ENCODE measurements at regions of chr2 and their contacts with region 1.

Region 1: DNA sequence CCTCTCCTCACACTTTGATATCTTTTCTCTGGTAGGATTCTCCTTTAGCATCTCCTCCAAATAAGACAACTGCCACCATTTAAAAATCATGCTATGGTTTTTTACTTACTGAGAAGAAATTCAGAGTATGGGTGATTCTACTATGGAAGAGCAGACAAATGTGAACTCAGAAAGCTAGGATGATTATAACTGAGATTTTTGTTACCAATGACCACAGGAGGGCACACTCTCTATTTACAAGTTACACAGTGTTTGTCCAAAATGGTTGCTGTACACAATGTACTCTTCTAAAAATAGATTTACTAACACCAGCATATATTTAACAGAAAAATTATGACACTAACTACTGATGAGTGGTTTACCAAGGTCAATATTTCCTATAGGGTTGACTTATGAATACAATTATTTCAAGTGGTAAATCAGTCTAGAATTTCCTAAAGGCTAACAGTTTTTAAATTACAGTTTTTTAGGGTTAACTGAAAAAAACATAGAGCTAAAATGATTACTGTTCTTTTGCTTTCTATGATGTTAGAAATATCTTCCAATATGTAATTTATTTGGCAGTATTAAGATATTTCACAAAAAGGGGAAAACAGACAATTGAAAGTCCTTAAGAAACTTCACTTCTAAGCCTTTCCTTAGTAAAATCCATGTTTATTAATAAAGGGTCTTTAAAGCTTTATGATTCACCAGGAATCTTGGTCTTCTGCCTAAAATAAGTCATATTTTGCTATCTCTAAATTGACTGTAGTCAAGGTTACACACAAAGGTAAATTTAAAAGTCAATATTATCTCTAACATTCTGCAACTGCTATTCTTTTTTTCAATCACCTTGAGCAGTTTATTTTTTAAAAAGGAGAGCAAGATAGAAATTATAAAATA is 57.2 kb downstream of the MAP4K3 start:
- DNase-seq: peak; percentile 65
- H3K4me3 ChIP-seq: no peak overlapping the region
- H3K27ac ChIP-seq: no peak overlapping the region
- H3K4me1 ChIP-seq: peaks cover 16% of the 10 kb centered on the region
- CTCF ChIP-seq: peak; percentile 93

Region 2: DNA sequence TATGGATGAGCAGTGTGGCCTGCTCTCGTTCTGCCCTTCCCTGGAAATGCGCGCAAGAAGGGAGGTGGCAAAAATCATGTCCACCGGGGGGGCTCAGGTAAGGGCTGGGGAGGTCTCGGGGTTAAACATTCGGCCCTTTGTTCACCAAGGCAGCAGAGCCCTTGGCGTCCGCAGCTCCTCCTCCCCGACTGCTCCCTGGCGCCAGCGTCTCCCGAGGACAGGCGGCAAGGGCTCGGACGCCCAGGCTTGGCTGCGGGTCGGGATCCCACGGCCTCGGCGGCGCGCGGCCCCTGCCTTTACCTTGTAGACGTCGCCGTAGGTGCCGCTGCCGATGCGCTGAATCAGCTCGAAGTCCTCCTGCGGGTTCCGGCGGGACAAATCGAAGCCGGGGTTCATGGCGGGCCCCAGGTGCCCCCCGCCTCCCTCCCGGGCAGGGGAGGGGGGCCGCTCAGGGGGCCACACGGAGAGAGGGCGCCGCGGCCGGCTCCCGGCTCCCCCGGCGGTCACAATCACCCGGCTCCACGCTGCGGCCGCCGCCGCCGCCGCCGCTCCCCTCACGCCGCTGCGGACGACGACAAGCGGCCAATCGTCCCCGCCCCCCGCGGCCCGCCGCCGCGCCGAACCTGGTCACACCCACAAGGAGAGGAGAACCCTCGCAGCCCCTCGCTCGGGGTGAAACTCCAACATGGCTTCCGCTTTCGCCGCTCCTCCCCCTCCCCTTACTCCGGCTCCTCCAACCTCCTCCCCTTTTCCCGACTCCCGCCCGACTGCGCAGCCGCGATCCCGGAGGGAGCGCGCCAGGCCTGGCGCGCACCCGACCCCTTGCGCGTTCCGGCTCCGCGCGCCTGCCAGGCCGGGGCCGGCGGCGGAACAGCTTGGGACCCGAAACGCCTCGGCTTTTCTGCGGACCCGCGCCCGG is 57.0 kb after region 1 on chr2 and contains the start of gene MAP4K3:
- CTCF ChIA-PET with region 1: no interaction called
- POLR2A ChIA-PET with region 1: interaction called, 3 read pairs
- intact Hi-C with region 1: loop called (anchors 2 kb)
- DNase-seq: peak; percentile 87
- H3K4me3 ChIP-seq: peak within 1 kb of the TSS; percentile 87
- H3K27ac ChIP-seq: peak within 1 kb of the TSS; percentile 61
- H3K4me1 ChIP-seq: peaks cover 32% of the 10 kb centered on the region
- CTCF ChIP-seq: no peak
- total RNA-seq, gene MAP4K3: 10.7 and 12.4 TPM in 2 replicates

Region 3: DNA sequence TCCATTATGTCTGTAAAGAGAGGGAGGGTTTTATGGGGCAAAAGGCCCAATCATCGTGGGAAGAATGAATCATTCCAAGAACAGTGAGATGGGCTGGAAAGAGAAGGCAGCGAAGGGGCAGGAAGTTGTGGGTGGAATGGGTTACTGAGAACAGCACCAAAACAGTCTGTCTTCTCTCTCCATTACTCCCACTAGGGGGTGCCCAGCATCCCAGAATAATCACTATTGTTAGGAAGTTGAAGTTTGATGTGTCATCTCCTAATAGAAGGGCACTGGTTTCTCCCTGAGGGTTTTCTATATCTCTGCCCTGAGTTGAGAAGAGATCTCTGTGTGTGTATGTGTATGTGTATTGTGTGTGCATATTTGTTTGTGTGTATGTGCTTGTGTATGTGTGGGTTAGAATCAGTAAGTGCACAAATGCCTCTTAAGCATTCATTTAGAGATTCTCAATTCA is 133.8 kb after region 1 on chr2:
- CTCF ChIA-PET with region 1: no interaction called
- POLR2A ChIA-PET with region 1: interaction called, 5 read pairs
- intact Hi-C with region 1: loop called (anchors 5 kb)
- DNase-seq: peak; percentile 56
- H3K4me3 ChIP-seq: no peak overlapping the region
- H3K27ac ChIP-seq: no peak overlapping the region
- H3K4me1 ChIP-seq: peaks cover 8% of the 10 kb centered on the region
- CTCF ChIP-seq: peak; percentile 78

Region 4: DNA sequence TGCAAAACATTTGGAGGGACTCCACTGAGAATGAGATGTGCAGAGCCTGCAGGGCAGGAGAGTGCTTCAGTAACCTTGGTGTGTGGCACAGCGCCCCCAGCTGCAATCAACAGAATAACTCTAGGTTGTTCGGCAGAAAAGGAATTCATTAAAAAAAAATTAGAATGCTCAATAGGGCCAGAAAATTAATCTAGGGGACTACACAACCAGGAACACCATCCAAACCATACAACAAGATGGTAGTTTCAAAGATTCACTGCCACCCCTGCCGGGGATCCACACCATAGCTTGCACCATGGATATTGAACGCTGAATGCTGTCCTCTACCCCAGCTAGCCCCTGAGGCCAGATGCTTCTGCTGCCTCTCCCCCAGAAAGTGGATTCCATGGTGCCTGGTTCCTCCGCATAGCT is 349.1 kb after region 1 on chr2:
- CTCF ChIA-PET with region 1: no interaction called
- POLR2A ChIA-PET with region 1: interaction called, 6 read pairs
- intact Hi-C with region 1: loop called (anchors 1 kb)
- DNase-seq: peak; percentile 59
- H3K4me3 ChIP-seq: no peak overlapping the region
- H3K27ac ChIP-seq: no peak overlapping the region
- H3K4me1 ChIP-seq: no peaks in the 10 kb centered on the region
- CTCF ChIP-seq: peak; percentile 91